Gastrocnemius medialis (tissue), 4 donors: ENCODE measurements at regions of chr1 and their contacts with region 1.

Region 1: DNA sequence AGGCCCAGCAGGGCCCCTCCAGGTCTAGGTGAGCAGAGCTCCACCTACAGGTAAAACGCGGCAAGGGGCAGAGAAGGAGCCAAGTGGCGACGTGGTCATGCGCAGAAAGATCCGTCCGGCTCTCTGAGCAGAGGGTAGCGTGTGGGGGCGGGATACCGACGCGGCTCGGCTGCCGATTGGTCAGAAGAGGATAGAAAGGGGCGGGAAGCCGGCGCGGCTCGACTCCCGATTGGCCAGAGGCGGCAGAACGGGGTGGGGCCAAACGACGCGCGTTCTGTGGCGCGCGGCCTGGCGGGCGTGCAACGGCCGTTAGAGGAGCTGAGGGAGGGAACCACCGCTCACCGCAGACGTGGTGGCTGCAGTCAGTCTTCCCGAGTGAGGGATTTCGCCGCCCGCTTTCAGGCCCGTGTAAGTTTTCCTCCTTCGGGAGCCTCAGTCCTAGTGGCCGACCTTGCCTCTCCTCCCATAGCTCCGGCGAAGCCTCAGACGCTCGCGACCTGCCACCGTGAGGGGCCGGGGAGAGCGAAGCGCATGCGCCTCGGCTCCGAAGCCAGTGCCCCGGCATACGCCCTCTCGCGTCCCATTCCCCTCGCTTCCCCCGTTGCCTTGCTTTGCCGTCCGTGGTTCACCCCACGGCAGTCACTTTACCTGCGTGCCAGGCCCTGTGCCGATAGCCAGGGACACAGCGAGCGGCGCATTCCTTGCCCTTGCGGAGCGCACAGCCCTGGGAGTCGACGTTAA is at the start of gene CEP85:
- DNase-seq: peak; percentile 98 to 99
- ATAC-seq: peak; percentile 91 to 92
- H3K4me3 ChIP-seq: peak within 1 kb of the TSS; percentile 81 to 96 (median 90)
- H3K27ac ChIP-seq: peak within 1 kb of the TSS; percentile 97 to 99 (median 98)
- H3K4me1 ChIP-seq: peaks cover 30 to 40% of the 10 kb centered on the region in 2 donors
- H3K27me3 ChIP-seq: no peaks in the 10 kb centered on the region
- CTCF ChIP-seq: peak; percentile 72 to 90 (median 89)
- POLR2A ChIP-seq: peak; percentile 96 to 97
- total RNA-seq, gene CEP85: 28.5 to 61.6 (median 41.3) TPM

Region 2: DNA sequence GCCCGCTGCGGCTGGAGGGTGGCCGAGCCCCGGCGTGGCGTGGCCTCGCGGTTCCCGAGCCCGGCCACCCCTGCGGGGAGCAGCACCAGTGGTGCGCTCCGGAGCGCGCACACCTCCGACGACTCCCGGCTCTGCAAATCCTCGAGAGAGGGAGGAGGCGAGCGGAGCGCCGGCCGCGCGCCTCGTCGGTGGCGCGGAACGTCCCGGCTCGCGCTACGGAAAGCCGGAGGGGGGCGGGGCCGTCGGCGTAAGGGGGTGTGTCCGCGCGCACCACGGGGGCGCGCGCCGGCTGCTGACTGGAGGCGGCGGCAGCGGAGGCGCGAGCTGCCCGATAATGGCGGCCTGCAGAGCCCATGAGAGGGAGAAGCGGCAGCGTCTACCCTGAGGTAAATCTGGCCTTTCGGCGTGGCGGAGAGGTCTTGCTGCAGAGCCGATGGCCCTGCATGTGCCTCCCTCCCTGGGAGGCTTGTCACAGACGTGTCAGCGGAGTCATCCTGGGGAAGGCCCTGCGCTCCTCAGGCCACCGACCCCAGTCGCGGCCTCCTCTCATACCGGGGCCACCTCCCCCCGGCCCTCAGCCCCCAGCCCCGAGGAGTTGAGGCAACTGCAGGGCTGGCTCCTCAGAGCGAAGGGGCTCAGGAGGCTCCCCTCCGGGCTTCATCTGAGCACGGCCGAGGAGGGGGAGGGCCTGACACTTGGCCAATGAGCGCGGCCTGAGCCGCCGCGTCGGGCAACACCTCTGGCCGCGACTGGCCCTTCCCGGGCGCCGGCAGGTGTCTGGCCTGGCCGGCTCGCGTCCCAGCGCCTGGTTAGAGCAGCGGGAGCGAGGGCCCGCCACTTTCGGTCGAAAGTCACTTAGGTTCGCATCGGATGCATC is 122.3 kb before region 1 on chr1 and contains the start of gene PDIK1L:
- in situ Hi-C with region 1: no loop called
- intact Hi-C with region 1: loop called (anchors 5 kb)
- DNase-seq: peak; percentile 85 to 93
- ATAC-seq: peak; percentile 73 to 76
- H3K4me3 ChIP-seq: peak within 1 kb of the TSS; percentile 89 to 96 (median 96)
- H3K27ac ChIP-seq: peak within 1 kb of the TSS; percentile 96 to 98 (median 97)
- H3K4me1 ChIP-seq: peaks cover 42 to 49% of the 10 kb centered on the region in 2 donors
- H3K27me3 ChIP-seq: no peaks in the 10 kb centered on the region
- CTCF ChIP-seq: peak in 1 of 5 experiments; percentile 24
- POLR2A ChIP-seq: peak; percentile 81 to 85
- total RNA-seq, gene PDIK1L: 4.4 to 8.7 (median 5.9) TPM

Region 3: GRCh38 chr1:26161415-26162219 is 72.5 kb before region 1 on chr1:
- in situ Hi-C with region 1: loop called in 1 of 4 experiments (anchors 5 kb)
- intact Hi-C with region 1: loop called (anchors 1 kb)
- DNase-seq: peak; percentile 36 to 69
- ATAC-seq: peak; percentile 66 to 78
- H3K4me3 ChIP-seq: peak overlapping the region; percentile 57 to 76 (median 68)
- H3K27ac ChIP-seq: peak overlapping the region; percentile 78 to 87 (median 84)
- H3K4me1 ChIP-seq: peaks cover 7 to 14% of the 10 kb centered on the region in 2 donors
- H3K27me3 ChIP-seq: no peaks in the 10 kb centered on the region
- CTCF ChIP-seq: peak; percentile 20 to 53 (median 36)
- POLR2A ChIP-seq: peak; percentile 68 to 74

Region 4: DNA sequence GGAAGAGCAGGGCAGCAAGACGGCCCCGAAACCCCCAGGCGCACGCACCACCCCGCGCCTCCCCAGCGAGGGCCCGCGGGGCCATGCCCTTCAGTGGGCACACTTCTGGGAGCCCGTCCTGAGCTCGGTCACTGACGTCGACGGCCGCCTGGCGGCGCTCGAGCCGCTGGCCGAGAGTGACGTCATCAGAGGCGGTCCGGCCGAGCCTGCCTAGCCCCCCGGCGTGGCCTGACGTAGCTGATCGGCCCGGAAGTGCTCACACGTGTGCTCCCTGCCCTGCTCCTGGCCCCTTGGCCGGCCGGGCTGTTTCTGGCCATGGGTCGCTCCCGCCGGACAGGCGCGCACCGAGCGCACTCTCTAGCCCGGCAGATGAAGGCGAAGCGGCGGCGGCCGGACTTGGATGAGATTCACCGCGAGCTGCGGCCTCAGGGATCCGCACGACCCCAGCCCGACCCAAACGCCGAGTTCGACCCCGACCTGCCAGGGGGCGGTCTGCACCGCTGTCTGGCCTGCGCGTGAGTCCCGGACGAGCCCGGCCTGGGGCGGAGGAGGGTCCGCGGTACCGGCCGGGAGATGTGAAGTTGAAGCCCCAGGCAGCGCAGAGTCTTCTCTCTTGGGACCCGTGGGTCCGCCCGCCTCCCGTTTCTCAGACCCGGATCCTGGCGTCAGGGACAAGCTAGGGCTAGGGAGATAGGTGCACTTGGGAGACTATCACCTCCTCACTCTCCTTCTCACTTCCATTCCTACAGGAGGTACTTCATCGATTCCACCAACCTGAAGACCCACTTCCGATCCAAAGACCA is 64.2 kb before region 1 on chr1 and contains the start of gene ZNF593:
- in situ Hi-C with region 1: loop called in 2 of 4 experiments (anchors 5 kb)
- intact Hi-C with region 1: loop called (anchors 1 kb)
- DNase-seq: peak; percentile 91
- ATAC-seq: peak; percentile 91 to 93
- H3K4me3 ChIP-seq: peak within 1 kb of the TSS; percentile 73 to 99 (median 86)
- H3K27ac ChIP-seq: peak within 1 kb of the TSS; percentile 88 to 97 (median 92)
- H3K4me1 ChIP-seq: peaks cover 20 to 26% of the 10 kb centered on the region in 2 donors
- H3K27me3 ChIP-seq: no peaks in the 10 kb centered on the region
- CTCF ChIP-seq: peak; percentile 93 to 97 (median 95)
- POLR2A ChIP-seq: peak; percentile 85 to 91
- total RNA-seq, gene ZNF593: 39.6 to 135 (median 97.3) TPM

Region 5: GRCh38 chr1:26181586-26182382 is 52.3 kb before region 1 on chr1:
- in situ Hi-C with region 1: no loop called
- intact Hi-C with region 1: loop called (anchors 2 kb)
- DNase-seq: peak; percentile 85 to 95
- ATAC-seq: peak; percentile 94 to 96
- H3K4me3 ChIP-seq: peak overlapping the region; percentile 38 to 52 (median 45)
- H3K27ac ChIP-seq: peak overlapping the region; percentile 94 to 98 (median 96)
- H3K4me1 ChIP-seq: peaks cover 26 to 35% of the 10 kb centered on the region in 2 donors
- H3K27me3 ChIP-seq: no peaks in the 10 kb centered on the region
- CTCF ChIP-seq: no peak
- POLR2A ChIP-seq: peak; percentile 40 to 55

Region 6: DNA sequence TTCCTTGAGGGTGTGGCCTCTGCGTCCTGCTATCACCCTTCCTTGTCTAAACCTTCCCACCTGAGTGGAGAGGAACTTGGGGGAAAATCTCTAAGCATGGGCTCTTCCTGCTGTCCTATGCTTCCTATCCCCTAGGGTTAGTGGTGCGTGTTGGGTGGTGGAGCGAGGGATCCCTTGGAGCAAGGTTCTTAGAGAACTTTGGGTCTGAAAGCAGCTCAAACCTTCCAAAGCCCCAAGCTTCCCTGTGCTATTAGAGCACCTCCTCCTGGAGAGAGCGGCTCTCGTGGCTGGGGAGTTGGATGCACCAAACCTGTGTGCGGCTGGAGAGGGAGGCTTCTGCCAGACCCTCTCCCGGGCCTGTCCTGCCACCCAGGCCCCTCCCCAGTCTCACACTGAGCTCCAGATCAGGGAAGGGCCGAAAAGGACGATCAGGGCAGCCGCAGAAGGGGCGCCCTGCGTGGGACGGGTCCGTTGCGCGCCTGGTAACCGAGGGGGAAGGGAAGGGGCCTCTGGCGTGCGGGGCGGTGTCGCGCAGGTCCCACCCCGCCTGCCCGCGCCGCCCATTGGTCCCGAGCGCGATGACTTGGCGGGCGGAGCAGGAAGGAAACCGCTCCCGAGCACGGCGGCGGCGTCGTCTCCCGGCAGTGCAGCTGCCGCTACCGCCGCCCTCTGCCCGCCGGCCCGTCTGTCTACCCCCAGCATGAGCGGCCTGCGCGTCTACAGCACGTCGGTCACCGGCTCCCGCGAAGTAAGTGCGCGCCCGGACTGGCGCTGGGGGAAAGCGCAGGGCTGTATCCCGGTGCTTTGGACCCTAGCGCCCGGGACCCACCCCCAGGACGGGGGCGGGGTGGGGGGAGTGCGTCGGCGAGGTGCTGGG is 45.6 kb after region 1 on chr1 and contains the start of gene SH3BGRL3:
- in situ Hi-C with region 1: no loop called
- intact Hi-C with region 1: loop called (anchors 1 kb)
- DNase-seq: peak; percentile 78 to 82
- ATAC-seq: peak; percentile 27 to 40
- H3K4me3 ChIP-seq: peak within 1 kb of the TSS; percentile 75 to 84 (median 78)
- H3K27ac ChIP-seq: peak within 1 kb of the TSS; percentile 89 to 98 (median 93)
- H3K4me1 ChIP-seq: peaks cover 54 to 67% of the 10 kb centered on the region in 2 donors
- H3K27me3 ChIP-seq: no peaks in the 10 kb centered on the region
- CTCF ChIP-seq: peak in 3 of 5 experiments; percentile 8 to 27 (median 20)
- POLR2A ChIP-seq: peak; percentile 84 to 90
- total RNA-seq, gene SH3BGRL3: 10.3 to 16.9 (median 13.1) TPM

Region 7: DNA sequence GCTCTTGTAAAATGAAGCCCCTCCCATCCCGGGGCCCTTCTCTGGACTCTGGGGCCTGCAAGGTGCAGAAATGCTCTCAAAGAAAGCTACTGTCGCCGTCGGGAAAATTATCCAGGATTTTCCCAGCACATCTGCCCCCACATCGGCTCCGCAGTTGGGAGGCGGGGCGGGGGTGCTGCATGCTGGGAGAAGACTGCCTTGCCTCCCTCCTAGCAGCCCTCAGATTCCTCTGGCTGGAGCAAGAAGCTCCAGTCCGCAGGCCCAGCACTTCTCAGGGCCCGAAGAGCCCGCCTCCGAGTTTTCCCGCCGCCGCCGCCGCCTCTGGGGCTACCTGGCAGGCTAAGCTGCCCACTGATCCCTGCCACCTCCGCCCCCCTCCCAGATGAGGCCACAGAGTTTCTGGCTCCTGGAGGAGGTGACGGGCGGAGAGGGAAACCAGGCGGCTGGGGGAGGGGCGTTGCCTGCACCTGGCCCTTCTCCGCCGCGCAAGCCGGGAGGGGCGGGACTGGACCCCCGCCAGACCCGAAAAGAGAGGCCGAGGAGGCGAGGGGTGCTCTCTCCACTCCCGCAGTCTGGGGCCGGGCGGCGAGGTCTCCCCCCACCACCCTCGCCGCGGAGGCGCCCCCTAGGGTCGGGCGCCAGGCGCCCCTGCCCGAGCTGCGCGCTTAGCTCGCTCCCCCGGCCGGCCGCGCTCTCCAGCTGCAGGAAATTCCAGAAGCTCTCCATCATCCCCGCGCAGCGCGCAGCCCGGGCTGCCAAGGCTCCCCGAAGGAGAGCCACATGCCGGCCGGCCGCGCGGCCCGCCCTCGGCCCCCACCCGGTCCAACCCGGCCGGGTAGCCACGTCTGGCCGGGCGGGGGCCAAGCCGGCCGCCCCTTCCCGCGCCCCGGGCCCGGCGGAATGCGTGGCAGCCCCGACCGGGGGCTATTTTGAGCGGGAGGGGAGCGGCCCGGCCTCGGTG is 1341.1 kb after region 1 on chr1:
- in situ Hi-C with region 1: no loop called
- intact Hi-C with region 1: loop called (anchors 10 kb)
- DNase-seq: peak in 1 of 2 donors; percentile 87
- ATAC-seq: peak; percentile 41 to 47
- H3K4me3 ChIP-seq: peak overlapping the region; percentile 52 to 66 (median 58)
- H3K27ac ChIP-seq: peak overlapping the region; percentile 95 to 100 (median 98)
- H3K4me1 ChIP-seq: peaks cover 82 to 85% of the 10 kb centered on the region in 2 donors
- H3K27me3 ChIP-seq: no peaks in the 10 kb centered on the region
- CTCF ChIP-seq: peak in 2 of 5 experiments; percentile 30 to 51
- POLR2A ChIP-seq: peak; percentile 27 to 57